CD8-positive, alpha-beta memory T cell (primary cell): ENCODE measurements at regions of chr19 and their contacts with region 1.

Region 1: DNA sequence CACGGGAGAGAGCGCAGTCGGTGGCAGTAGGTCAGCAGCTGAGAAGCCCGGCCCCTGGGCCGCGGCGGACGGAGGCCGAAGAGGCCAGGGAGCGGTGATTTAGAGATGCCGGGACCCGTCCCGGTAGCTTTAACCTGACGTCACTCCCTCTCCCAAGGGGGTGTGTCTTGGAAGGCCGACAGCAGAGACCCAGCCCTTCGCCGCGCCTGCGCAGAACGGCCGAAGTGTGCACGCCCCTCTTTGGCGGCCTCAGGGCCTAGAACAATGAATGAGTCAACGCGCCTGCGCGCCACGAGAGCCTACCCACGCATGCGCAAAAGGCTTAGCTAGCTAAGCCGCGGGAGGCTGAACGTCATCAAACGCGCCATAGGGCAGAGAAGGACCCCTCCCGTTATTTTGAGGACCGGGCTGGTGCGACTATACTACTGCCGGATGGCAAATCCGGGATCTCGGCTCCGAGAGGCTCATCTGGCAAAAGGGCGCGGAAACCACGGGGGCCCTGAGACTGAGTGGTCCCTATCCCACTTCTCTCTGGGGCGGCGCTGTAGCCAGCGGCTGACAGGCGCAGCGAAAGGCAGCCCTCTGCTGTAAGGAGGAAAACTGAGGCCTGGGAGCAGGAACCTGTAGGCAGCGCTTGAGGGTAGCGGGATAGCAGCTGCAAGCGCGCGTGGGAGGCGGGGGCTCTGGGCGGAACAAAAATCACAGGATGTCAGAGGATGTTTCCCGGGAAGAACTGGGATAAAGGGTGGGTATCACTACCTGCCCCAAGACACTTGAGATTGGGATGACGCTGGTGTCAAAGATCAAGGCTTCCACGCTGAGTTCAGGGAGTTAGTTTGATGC is at the starts of genes IRGQ and ZNF576:
- DNase-seq: peak; percentile 99 to 100 (median 100)
- H3K4me3 ChIP-seq: peak within 1 kb of the TSS; percentile 71
- H3K4me3 Mint-ChIP-seq: peak within 1 kb of the TSS; percentile 89 to 98 (median 96)
- H3K27ac ChIP-seq: peak within 1 kb of the TSS; percentile 96
- H3K27ac Mint-ChIP-seq: peak within 1 kb of the TSS; percentile 99 to 100 (median 100)
- H3K4me1 ChIP-seq: peaks cover 38% of the 10 kb centered on the region
- H3K4me1 Mint-ChIP-seq: peaks cover 39 to 50% (median 43%) of the 10 kb centered on the region in 3 donors
- H3K27me3 ChIP-seq: no peaks in the 10 kb centered on the region
- H3K27me3 Mint-ChIP-seq: peaks cover 0 to 4% of the 10 kb centered on the region in 2 donors
- total RNA-seq, gene IRGQ: 25.4 to 30.2 TPM
- total RNA-seq, gene ZNF576: 19.5 to 20.9 TPM

Region 2: DNA sequence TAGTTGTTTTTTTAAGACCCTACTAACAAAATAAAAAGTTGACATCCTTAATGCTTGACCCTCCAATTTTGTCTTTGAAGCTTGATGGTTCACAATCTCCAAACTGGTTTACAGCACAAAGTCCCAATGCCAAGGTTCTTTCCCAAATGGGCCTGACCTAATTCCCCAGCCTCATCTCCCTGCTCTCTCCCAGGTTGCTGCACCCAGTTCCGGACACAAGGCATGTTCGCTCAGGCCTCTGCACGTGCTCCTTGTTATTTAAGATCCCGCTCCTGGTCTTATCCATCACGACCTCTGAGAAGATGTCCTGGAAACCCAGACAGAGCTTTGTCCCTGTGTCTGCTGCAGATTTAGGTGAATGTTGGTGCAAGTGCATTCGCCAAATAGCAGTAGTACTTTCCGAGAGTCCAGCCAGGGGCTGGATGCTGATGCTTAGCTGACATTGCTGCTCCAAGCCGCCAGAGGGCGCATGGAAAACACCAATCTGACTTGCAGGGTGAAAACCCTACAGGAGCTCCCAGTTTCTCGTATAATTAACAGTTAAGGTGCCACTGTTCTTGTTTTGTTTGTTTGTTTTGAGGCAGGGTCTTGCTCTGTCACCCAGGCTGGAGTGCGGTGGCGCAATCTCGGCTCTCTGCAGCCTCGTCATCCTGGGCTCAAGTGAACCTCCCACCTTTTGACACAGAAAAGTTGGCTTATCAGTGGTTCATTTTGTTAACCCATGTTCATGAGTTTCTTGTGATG is 149.3 kb before region 1 on chr19:
- CTCF ChIA-PET with region 1: interaction called, 35 read pairs
- POLR2A ChIA-PET with region 1: interaction called, 5 read pairs
- DNase-seq: peak; percentile 68 to 85 (median 70)
- H3K4me3 ChIP-seq: no peak overlapping the region
- H3K4me3 Mint-ChIP-seq: peak overlapping the region in 1 of 7 donors; percentile 27
- H3K27ac ChIP-seq: no peak overlapping the region
- H3K27ac Mint-ChIP-seq: peak overlapping the region in 6 of 8 donors; percentile 35 to 89 (median 75)
- H3K4me1 ChIP-seq: peaks cover 7% of the 10 kb centered on the region
- H3K4me1 Mint-ChIP-seq: peaks cover 5 to 21% (median 19%) of the 10 kb centered on the region in 3 donors
- H3K27me3 ChIP-seq: no peaks in the 10 kb centered on the region
- H3K27me3 Mint-ChIP-seq: no peaks in the 10 kb centered on the region

Region 3: DNA sequence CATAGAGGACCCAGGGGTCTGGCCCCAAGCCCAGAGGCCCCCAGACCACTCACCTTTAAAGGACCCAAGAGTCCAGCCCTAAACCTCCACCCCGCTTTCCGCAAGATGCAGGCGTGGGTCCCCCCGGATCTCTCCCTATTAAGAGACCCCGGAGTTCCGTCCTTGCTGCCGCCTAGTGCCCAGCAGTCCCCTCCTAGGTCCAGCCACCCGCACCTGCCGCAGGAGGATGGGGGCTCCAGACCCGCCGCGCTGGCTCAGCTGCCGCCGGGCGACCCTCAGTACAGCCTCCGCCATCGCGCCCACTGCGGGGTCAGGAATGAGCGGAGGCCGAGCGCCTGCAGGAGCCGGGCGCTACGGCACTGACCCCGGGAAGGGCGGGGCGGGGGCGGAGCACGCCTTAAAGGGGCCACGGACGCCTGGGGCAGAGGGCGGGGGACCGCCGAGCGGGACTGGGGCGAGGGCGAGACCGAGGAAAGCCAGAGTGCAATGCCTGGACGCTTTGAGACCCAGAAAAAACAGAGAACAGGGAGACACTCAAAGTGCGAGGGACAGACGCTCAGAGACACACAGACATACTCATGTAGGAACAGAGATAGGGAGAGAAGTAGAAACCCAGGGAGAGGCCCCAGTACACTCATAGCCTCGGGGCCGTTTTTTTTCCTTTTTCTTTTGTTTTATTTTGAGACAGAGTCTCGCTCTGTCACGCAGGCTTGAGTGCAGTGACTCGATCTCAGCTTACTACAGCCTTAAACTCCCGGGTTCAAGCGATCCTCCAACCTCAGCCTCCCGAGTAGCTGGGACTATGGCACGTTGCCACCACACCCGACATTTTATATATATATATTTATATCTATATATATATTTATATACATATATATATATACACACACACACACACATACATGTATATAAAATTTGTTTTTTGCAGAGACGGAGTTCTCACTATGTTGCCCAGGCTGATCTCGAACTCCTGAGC is 69.0 kb before region 1 on chr19 and contains the start of gene ETHE1:
- CTCF ChIA-PET with region 1: interaction called, 50 read pairs
- POLR2A ChIA-PET with region 1: interaction called, 9 read pairs
- DNase-seq: peak; percentile 53 to 80 (median 69)
- H3K4me3 ChIP-seq: peak within 1 kb of the TSS; percentile 76
- H3K4me3 Mint-ChIP-seq: peak within 1 kb of the TSS; percentile 76 to 97 (median 81)
- H3K27ac ChIP-seq: peak within 1 kb of the TSS; percentile 49
- H3K27ac Mint-ChIP-seq: peak within 1 kb of the TSS; percentile 73 to 96 (median 91)
- H3K4me1 ChIP-seq: peaks cover 22% of the 10 kb centered on the region
- H3K4me1 Mint-ChIP-seq: peaks cover 22 to 35% (median 35%) of the 10 kb centered on the region in 3 donors
- H3K27me3 ChIP-seq: no peaks in the 10 kb centered on the region
- H3K27me3 Mint-ChIP-seq: no peaks in the 10 kb centered on the region
- total RNA-seq, gene ETHE1: 34.4 to 42.3 TPM

Region 4: DNA sequence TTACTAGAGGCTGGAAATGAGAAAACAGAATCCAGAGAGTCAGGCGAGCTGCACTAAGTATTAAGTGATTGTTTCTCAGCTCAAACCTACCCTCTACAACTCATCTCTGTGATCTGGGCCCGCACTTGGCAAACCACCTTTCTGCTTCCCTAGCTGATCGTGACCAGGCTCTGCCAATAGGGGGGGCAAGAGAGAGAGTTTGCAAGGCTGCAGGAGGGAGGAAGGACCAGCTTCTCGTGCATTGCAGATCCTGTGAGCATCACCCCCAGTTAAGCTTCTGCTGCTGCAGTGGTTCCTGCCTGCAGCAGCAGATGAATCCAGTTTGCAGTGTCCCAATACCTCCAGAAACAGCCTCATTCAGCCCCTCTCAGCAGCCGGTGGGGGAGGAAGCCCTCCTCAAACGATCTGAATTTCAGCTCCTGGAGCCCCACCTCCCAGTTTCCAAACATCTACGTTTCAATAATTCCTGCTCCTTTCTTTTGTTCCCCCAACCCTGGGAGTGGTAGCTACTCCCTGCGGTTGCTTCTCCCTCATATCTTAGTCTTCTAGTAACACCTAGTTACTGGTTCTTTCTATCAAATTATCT is 40.9 kb before region 1 on chr19:
- CTCF ChIA-PET with region 1: interaction called, 124 read pairs
- POLR2A ChIA-PET with region 1: interaction called, 23 read pairs
- DNase-seq: peak; percentile 74 to 87 (median 77)
- H3K4me3 ChIP-seq: no peak overlapping the region
- H3K4me3 Mint-ChIP-seq: peak overlapping the region in 1 of 7 donors; percentile 28
- H3K27ac ChIP-seq: no peak overlapping the region
- H3K27ac Mint-ChIP-seq: peak overlapping the region; percentile 25 to 86 (median 58)
- H3K4me1 ChIP-seq: peaks cover 9% of the 10 kb centered on the region
- H3K4me1 Mint-ChIP-seq: peaks cover 16 to 20% (median 18%) of the 10 kb centered on the region in 3 donors
- H3K27me3 ChIP-seq: no peaks in the 10 kb centered on the region
- H3K27me3 Mint-ChIP-seq: no peaks in the 10 kb centered on the region

Region 5: GRCh38 chr19:43570174-43570791 is 25.9 kb before region 1 on chr19:
- CTCF ChIA-PET with region 1: interaction called, 15 read pairs
- POLR2A ChIA-PET with region 1: interaction called, 19 read pairs
- DNase-seq: no peak
- H3K4me3 ChIP-seq: no peak overlapping the region
- H3K4me3 Mint-ChIP-seq: peak overlapping the region in 1 of 7 donors; percentile 64
- H3K27ac ChIP-seq: no peak overlapping the region
- H3K27ac Mint-ChIP-seq: peak overlapping the region; percentile 11 to 84 (median 70)
- H3K4me1 ChIP-seq: peaks cover 8% of the 10 kb centered on the region
- H3K4me1 Mint-ChIP-seq: peaks cover 31 to 62% (median 53%) of the 10 kb centered on the region in 3 donors
- H3K27me3 ChIP-seq: no peaks in the 10 kb centered on the region
- H3K27me3 Mint-ChIP-seq: no peaks in the 10 kb centered on the region

Region 6: DNA sequence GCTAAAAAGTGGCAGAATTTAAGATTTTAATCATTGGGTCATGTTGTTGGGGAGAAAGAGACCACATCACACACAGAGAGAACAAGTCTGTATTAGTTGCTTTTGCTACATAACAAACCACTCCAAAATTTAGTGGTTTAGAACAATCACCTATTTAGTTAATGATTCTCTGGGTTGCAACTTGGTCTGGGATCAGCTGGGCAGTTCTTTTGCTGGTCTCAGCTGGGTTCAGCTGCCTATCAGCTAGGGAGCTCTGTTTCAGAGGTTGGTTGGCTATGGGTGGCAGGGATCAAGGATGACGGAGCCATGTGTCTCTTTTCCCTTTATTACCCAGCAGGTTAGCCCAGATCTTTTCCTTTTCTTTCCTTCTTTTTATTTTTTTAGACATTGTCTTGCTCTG is 11.7 kb before region 1 on chr19:
- CTCF ChIA-PET with region 1: interaction called, 14 read pairs
- POLR2A ChIA-PET with region 1: interaction called, 4 read pairs
- DNase-seq: no peak
- H3K4me3 ChIP-seq: no peak overlapping the region
- H3K4me3 Mint-ChIP-seq: no peak overlapping the region
- H3K27ac ChIP-seq: no peak overlapping the region
- H3K27ac Mint-ChIP-seq: peak overlapping the region in 7 of 8 donors; percentile 38 to 81 (median 68)
- H3K4me1 ChIP-seq: peaks cover 11% of the 10 kb centered on the region
- H3K4me1 Mint-ChIP-seq: peaks cover 16 to 38% (median 23%) of the 10 kb centered on the region in 3 donors
- H3K27me3 ChIP-seq: no peaks in the 10 kb centered on the region
- H3K27me3 Mint-ChIP-seq: no peaks in the 10 kb centered on the region